ENCODE measurements at regions of chr16 and their contacts with region 1.

Region 1: DNA sequence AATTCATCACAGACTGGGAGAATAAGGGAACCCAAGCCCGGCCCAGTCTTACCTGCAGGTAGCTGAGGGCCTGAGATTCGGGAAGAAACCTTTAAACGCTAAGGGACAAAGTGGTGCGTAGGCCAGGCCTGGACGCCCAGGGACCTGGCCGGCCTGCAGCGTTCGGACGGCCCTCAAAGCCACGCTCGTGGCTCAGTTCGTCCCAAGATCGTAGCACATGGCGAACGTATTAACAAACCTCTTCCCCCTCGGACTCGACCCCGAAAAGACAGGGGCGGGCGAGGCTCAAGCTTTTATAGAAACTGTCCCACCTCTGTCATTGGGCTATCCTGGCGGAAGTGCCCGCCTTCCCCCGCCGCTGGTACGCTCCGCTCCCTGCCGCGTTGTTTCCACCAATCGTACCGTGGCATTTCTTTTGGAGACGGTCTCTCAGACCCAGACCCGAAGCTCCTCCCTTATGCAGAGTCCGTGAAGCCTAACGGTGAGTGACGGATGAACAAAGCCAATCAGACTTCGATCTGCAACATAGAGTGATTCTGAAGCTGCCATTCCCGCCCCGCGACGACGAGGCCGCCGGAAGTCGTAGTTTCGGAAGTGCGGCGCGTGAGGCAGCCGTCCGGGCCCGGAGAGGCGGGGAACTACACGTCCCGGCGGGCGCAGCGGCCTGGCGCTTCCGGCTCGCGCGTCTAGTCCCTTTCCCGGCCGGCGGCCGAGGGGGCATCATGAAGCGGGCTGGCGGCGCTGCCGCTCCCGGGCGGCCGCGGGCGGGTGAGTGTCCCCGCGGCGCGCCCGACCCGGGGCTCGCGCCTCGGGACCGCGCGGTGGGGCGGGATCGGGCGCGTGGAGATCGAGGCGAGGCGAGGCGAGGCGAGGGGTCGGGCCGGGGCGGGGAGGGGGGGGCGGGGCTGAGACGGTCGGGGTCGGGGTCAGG is at the start of gene TRAF7:
- DNase-seq: peak; percentile 100
- H3K4me3 ChIP-seq: peak within 1 kb of the TSS; percentile 91
- H3K27ac ChIP-seq: peak within 1 kb of the TSS; percentile 92
- H3K4me1 ChIP-seq: peaks cover 57% of the 10 kb centered on the region
- H3K27me3 ChIP-seq: no peaks in the 10 kb centered on the region
- CTCF ChIP-seq: no peak
- total RNA-seq, gene TRAF7: 96.7 and 97.4 TPM in 2 replicates

Region 2: GRCh38 chr16:2009789-2010510 is 145.4 kb before region 1 on chr16 and contains the start of gene ZNF598:
- CTCF ChIA-PET with region 1: no interaction called
- POLR2A ChIA-PET with region 1: interaction called, 18 read pairs
- intact Hi-C with region 1: no loop called
- DNase-seq: peak; percentile 93
- H3K4me3 ChIP-seq: peak within 1 kb of the TSS; percentile 99
- H3K27ac ChIP-seq: peak within 1 kb of the TSS; percentile 93
- H3K4me1 ChIP-seq: peaks cover 38% of the 10 kb centered on the region
- H3K27me3 ChIP-seq: no peaks in the 10 kb centered on the region
- CTCF ChIP-seq: no peak
- total RNA-seq, gene ZNF598: 68.0 and 75.8 TPM in 2 replicates

Region 3: GRCh38 chr16:2016407-2016922 is 138.9 kb before region 1 on chr16:
- CTCF ChIA-PET with region 1: no interaction called
- POLR2A ChIA-PET with region 1: interaction called, 18 read pairs
- intact Hi-C with region 1: loop called (anchors 5 kb)
- DNase-seq: peak; percentile 55
- H3K4me3 ChIP-seq: no peak overlapping the region
- H3K27ac ChIP-seq: no peak overlapping the region
- H3K4me1 ChIP-seq: no peaks in the 10 kb centered on the region
- H3K27me3 ChIP-seq: no peaks in the 10 kb centered on the region
- CTCF ChIP-seq: peak; percentile 70

Region 4: DNA sequence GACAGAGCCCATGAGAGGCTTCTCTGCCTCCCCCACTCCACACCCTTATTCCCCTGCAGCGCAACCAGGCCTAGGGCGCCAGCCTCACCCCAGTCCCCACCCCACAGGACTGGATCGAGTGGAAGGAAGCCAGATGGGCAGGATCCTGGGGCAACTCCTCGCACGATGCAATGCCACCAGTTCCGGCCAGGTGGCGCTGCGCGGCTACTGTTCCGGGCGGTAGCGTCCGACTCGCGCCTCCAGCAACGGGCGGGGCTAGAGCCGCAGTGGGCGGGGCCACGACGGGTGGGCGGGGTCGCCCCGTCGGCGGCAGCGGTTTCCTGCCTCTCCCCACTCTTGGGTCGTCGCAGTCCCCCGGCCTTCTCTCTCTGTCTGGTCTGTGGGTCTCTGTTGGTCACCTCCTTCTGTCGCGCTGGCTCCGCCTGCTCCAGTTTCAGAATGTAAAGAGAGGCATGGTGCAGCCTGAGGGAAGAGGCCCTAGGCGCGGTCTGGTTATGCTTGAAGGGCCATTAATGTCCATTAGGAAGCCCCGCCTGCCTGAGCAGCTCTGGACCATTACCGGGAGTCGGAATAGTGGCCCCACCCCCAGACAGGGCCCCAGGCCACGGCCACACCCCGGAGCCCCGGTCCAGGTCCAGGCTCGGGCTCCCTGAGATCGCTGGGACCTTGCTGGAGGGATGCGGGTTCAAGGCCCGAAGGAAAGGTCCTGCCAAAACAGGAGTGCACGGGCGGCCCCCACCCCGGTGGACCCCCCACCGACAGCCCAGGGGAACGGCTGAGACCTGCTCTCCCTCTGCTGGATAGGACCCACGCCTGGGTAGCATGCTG is 132.0 kb before region 1 on chr16:
- CTCF ChIA-PET with region 1: interaction called, 3 read pairs
- POLR2A ChIA-PET with region 1: interaction called, 10 read pairs
- intact Hi-C with region 1: loop called (anchors 5 kb)
- DNase-seq: peak; percentile 91
- H3K4me3 ChIP-seq: peak overlapping the region; percentile 8
- H3K27ac ChIP-seq: peak overlapping the region; percentile 26
- H3K4me1 ChIP-seq: peaks cover 21% of the 10 kb centered on the region
- H3K27me3 ChIP-seq: no peaks in the 10 kb centered on the region
- CTCF ChIP-seq: peak; percentile 98

Region 5: DNA sequence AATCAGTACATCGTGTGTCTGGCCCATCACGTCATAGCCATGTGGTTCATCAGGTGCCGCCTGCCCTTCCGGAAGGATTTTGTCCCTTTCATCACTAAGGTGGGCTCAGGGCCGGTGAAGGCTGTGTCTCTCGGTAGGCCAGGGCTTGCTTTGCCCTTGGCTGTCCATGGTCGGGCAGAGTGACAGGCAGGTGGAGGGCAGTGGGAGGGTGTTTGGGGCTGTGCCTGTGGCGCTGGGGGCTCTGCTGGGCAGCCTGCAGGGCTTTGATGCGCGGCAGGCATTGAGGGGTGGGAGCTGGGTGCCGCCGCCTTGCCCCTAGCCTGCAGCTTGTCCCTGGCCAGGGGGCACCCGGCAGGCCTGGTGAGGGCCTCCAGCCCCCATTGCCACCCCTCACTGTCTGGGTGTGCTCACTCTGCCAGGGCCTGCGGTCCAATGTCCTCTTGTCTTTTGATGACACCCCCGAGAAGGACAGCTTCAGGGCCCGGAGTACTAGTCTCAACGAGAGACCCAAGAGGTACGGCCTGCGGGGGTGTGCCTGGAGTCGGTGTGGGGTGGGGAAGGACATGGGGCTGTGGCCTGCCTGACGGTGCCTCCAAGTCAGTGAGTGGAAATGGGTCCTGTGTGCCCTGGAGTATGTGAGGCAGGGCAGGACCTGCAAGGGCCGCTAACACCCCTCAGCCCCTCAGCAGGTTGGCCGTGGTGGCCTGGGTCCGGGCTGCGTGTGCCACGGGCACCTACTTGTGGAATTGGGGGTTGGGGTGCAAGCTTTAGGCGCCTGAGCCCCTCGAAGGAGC is 79.1 kb before region 1 on chr16:
- CTCF ChIA-PET with region 1: no interaction called
- POLR2A ChIA-PET with region 1: interaction called, 23 read pairs
- intact Hi-C with region 1: no loop called
- DNase-seq: no peak
- H3K4me3 ChIP-seq: no peak overlapping the region
- H3K27ac ChIP-seq: no peak overlapping the region
- H3K4me1 ChIP-seq: no peaks in the 10 kb centered on the region
- H3K27me3 ChIP-seq: no peaks in the 10 kb centered on the region
- CTCF ChIP-seq: no peak

Region 6: GRCh38 chr16:2223375-2224182 is 68.2 kb after region 1 on chr16 and contains the start of gene E4F1:
- CTCF ChIA-PET with region 1: no interaction called
- POLR2A ChIA-PET with region 1: no interaction called
- intact Hi-C with region 1: loop called (anchors 5 kb)
- DNase-seq: peak; percentile 100
- H3K4me3 ChIP-seq: peak within 1 kb of the TSS; percentile 94
- H3K27ac ChIP-seq: peak within 1 kb of the TSS; percentile 91
- H3K4me1 ChIP-seq: no peaks in the 10 kb centered on the region
- H3K27me3 ChIP-seq: no peaks in the 10 kb centered on the region
- CTCF ChIP-seq: no peak
- total RNA-seq, gene E4F1: 36.0 and 41.6 TPM in 2 replicates

Region 7: GRCh38 chr16:2520092-2520783 is 364.9 kb after region 1 on chr16 and contains the start of gene AMDHD2:
- CTCF ChIA-PET with region 1: no interaction called
- POLR2A ChIA-PET with region 1: interaction called, 26 read pairs
- intact Hi-C with region 1: no loop called
- DNase-seq: peak; percentile 94
- H3K4me3 ChIP-seq: peak within 1 kb of the TSS; percentile 65
- H3K27ac ChIP-seq: peak within 1 kb of the TSS; percentile 77
- H3K4me1 ChIP-seq: peaks cover 12% of the 10 kb centered on the region
- H3K27me3 ChIP-seq: no peaks in the 10 kb centered on the region
- CTCF ChIP-seq: no peak
- total RNA-seq, gene AMDHD2: 52.2 and 53.3 TPM in 2 replicates

Measured in A673 (cell line).